ENCODE measurements at regions of chr11 and their contacts with region 1.

Region 1: GRCh38 chr11:47642099-47642855 is at the start of gene MTCH2:
- DNase-seq: peak; percentile 94 to 98
- H3K4me3 ChIP-seq: peak within 1 kb of the TSS; percentile 71 to 88
- H3K27ac ChIP-seq: peak within 1 kb of the TSS; percentile 90 to 91
- H3K4me1 ChIP-seq: peaks cover 0 to 25% (median 15%) of the 10 kb centered on the region in 4 donors
- H3K27me3 ChIP-seq: no peaks in the 10 kb centered on the region
- CTCF ChIP-seq: peak; percentile 37 to 44

Region 2: GRCh38 chr11:47565340-47566148 is 76.7 kb before region 1 on chr11 and contains the start of gene PTPMT1:
- intact Hi-C with region 1: no loop called
- DNase-seq: peak; percentile 67 to 88
- H3K4me3 ChIP-seq: peak within 1 kb of the TSS; percentile 74 to 80
- H3K27ac ChIP-seq: peak within 1 kb of the TSS; percentile 82 to 89
- H3K4me1 ChIP-seq: peaks cover 0 to 19% (median 15%) of the 10 kb centered on the region in 4 donors
- H3K27me3 ChIP-seq: no peaks in the 10 kb centered on the region
- CTCF ChIP-seq: no peak

Region 3: DNA sequence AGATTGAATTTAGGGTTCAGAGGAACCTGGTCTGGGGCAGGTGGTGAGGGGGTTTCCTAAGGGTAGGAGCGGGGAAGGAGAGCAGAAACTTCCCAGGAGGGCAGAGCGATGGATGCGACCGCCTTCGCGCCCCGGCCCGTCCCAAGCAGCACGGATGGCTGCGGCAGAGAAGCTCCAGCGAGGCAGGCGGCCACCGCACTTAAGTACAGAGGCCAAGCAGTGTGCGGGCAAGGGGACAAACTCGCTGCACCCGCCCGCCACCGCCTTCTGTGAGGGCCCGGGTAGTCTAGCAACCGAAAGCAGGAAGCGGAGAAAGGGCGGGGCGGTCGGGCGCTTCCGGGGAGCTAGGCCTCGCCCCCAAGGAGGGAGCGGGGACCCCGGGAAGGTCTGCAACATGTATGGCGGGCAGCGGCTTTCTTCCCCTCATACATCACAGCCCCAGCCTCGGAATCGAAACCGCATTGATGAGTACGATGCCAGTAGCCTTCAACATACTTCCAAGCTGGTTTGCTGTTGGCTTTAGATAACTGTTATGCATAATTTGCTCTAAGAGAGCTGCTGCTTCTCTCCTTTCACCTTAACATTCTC is 72.9 kb after region 1 on chr11 and contains the start of gene AGBL2:
- intact Hi-C with region 1: loop called (anchors 10 kb)
- DNase-seq: peak; percentile 63 to 80
- H3K4me3 ChIP-seq: peak within 1 kb of the TSS; percentile 63 to 82
- H3K27ac ChIP-seq: peak within 1 kb of the TSS; percentile 71 to 73
- H3K4me1 ChIP-seq: no peaks in the 10 kb centered on the region
- H3K27me3 ChIP-seq: no peaks in the 10 kb centered on the region
- CTCF ChIP-seq: no peak

Measured in tibial artery (tissue), 4 donors.